ENCODE measurements at regions of chr17 and their contacts with region 1.

Region 1: GRCh38 chr17:75087558-75088453 is at the start of gene SLC16A5:
- DNase-seq: no peak
- H3K4me3 ChIP-seq: peak within 1 kb of the TSS; percentile 69
- CTCF ChIP-seq: no peak

Region 2: GRCh38 chr17:74923533-74924249 is 164.1 kb before region 1 on chr17:
- CTCF ChIA-PET with region 1: no interaction called
- POLR2A ChIA-PET with region 1: no interaction called
- DNase-seq: no peak
- H3K4me3 ChIP-seq: no peak overlapping the region
- CTCF ChIP-seq: peak; percentile 83

Region 3: GRCh38 chr17:75069783-75070182 is 18.0 kb before region 1 on chr17:
- CTCF ChIA-PET with region 1: interaction called, 10 read pairs
- POLR2A ChIA-PET with region 1: no interaction called
- DNase-seq: no peak
- H3K4me3 ChIP-seq: no peak overlapping the region
- CTCF ChIP-seq: peak; percentile 36

Region 4: DNA sequence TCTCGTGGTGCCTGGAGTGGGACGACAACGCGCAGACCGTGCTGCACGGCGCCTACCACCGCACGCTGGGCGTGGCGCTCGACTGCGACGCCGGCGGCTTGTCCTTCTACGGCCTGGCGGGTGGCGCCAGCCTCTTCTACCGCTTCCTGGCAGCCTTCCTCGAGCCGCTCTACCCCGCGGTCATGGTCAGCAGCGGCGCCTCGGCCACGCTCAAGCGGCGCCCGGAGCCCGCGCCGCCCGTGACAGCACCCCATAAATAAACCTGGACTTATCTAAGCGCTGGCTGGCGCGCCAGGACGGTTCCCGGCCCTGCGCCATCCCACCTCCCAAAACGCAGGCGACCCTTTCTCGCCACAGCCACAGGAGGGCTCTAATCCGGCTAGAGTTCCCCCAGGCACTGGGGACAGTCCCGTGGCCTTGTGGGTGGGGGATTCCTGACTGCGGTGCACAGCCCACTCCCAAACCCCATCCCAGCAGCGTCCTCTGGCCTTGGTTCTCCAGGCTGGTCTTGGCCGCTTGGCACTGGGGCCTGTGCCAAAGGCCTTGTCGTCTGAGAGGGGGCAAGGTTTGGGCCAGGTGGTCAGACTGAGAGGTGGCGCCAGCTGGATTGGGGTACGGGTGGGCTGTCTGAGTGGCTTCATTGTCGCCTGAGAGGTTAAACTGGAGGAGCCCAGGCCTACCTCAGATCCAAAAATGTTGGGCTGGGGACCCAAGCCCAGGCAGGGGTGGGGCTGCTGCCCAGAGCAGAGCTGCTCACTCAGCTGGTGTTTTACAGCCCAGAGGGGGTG is 10.1 kb before region 1 on chr17:
- CTCF ChIA-PET with region 1: interaction called, 7 read pairs
- POLR2A ChIA-PET with region 1: interaction called, 11 read pairs
- DNase-seq: no peak
- H3K4me3 ChIP-seq: no peak overlapping the region
- CTCF ChIP-seq: peak; percentile 8